Breast epithelium (tissue), 4 donors: ENCODE measurements at regions of chr3 and their contacts with region 1.

Region 1: GRCh38 chr3:19293295-19293694 is 145.0 kb downstream of the KCNH8 start:
- DNase-seq: no peak
- H3K4me3 ChIP-seq: no peak overlapping the region
- H3K27ac ChIP-seq: no peak overlapping the region
- H3K4me1 ChIP-seq: no peaks in the 10 kb centered on the region
- H3K27me3 ChIP-seq: no peaks in the 10 kb centered on the region
- CTCF ChIP-seq: no peak
- POLR2A ChIP-seq: no peak

Region 2: DNA sequence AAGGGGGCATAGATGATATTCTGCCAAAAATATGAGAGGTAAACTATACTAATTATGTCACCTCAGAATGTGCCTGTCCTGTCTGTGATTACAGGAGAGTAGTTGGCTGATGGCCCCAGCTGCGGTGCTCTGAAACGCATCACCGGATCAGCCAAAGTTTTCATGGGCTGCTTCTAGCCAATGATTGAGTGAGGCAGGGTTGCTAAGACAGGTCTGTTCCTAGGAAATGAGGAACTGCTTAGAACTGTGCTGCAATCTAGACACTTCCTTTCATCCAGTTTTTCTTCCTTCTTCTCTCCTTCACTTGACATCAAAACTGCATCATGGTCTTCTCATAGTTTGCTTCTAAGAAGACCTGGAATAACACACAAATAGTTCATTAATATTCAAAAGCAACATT is 21.0 kb before region 1 on chr3:
- intact Hi-C with region 1: no loop called
- DNase-seq: no peak
- H3K4me3 ChIP-seq: no peak overlapping the region
- H3K27ac ChIP-seq: no peak overlapping the region
- H3K4me1 ChIP-seq: no peaks in the 10 kb centered on the region
- H3K27me3 ChIP-seq: no peaks in the 10 kb centered on the region
- CTCF ChIP-seq: no peak
- POLR2A ChIP-seq: no peak

Region 3: GRCh38 chr3:19331931-19332330 is 38.6 kb after region 1 on chr3:
- intact Hi-C with region 1: loop called (anchors 2 kb)
- DNase-seq: no peak
- H3K4me3 ChIP-seq: no peak overlapping the region
- H3K27ac ChIP-seq: no peak overlapping the region
- H3K4me1 ChIP-seq: no peaks in the 10 kb centered on the region
- H3K27me3 ChIP-seq: no peaks in the 10 kb centered on the region
- CTCF ChIP-seq: no peak
- POLR2A ChIP-seq: no peak